HEK293T (cell line): ENCODE measurements at regions of chr1 and their contacts with region 1.

Region 1: GRCh38 chr1:15014516-15014915 is 139.0 kb upstream of the TMEM51 start:
- DNase-seq: no peak

Region 2: GRCh38 chr1:15028102-15028501 is 13.6 kb after region 1 on chr1:
- CTCF ChIA-PET with region 1: interaction called, 10 read pairs
- POLR2A ChIA-PET with region 1: no interaction called
- DNase-seq: no peak